HEK293 (cell line): ENCODE measurements at regions of chr2 and their contacts with region 1.

Region 1: DNA sequence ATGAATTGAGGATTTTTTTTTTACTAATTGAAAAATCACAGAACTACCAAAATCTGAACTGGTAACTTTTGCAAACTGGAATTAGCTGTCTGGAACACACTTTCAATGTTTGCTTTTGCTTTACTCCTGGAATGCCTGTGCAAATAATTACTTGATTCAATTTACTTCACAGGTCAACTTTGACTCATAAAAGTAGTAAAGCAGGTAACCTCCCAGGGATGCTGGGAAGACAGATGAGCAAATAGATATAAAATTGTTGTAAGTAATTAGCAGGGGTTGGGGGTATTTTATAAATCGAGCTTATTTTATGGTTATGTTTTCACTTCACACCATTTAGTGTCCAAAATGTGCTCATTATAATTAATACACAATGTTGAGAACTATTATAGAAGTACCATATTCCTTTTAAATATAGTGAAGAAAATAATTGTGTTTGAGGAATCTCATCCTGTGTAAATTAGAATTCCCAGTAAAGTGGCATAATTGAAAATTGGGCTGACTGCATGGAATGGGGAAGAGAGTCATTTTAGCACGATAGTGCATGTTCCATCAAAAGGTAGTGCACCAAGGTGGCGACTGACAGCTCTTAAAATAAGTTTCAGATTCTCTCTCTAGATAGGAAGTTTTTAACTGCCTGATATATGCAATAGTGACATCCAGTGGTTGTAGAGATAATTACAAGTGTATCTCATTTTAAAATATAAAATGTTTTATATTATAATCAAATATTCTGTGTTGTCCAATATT is 398.1 kb upstream of the HNRNPA3 start:
- H3K4me3 ChIP-seq: no peak overlapping the region
- H3K27ac ChIP-seq: no peak overlapping the region
- H3K4me1 ChIP-seq: peaks cover 4% of the 10 kb centered on the region; the same call in 1 of the 2 replicates
- CTCF ChIP-seq: peak; percentile 36; the same call in 1 of the 2 replicates

Region 2: GRCh38 chr2:176669398-176670174 is 144.9 kb before region 1 on chr2:
- CTCF ChIA-PET with region 1: no interaction called
- POLR2A ChIA-PET with region 1: no interaction called
- H3K4me3 ChIP-seq: no peak overlapping the region
- H3K27ac ChIP-seq: no peak overlapping the region
- H3K4me1 ChIP-seq: no peaks in the 10 kb centered on the region
- CTCF ChIP-seq: no peak

Region 3: DNA sequence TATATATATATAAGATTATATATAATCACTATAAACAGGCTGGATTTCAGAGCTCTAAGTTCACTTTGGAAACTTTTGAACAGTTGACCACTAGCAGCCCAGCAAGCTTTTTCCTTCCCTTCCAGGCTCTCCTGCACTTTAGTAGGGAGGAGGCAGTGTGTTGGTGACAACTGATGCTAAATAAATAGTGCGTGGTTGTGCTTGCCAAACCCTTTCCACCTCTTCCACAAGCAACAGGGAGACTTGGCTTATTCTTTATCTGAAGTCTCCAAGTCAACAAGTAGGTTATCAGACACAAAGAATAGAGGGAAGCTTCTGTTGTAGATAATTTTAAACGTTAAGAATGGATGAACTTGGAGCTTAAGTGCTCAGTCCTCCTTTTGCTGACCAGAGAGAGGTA is 10.1 kb before region 1 on chr2:
- CTCF ChIA-PET with region 1: interaction called, 13 read pairs
- POLR2A ChIA-PET with region 1: no interaction called
- H3K4me3 ChIP-seq: no peak overlapping the region
- H3K27ac ChIP-seq: no peak overlapping the region
- H3K4me1 ChIP-seq: no peaks in the 10 kb centered on the region
- CTCF ChIP-seq: no peak